ENCODE measurements at regions of chr6 and their contacts with region 1.

Region 1: GRCh38 chr6:126804332-126805064 is 314.0 kb upstream of the RSPO3 start:
- DNase-seq: no peak
- ATAC-seq: no peak
- H3K4me3 Mint-ChIP-seq: no peak overlapping the region
- H3K27ac Mint-ChIP-seq: no peak overlapping the region
- H3K4me1 Mint-ChIP-seq: no peaks in the 10 kb centered on the region
- H3K27me3 Mint-ChIP-seq: peaks cover 2% of the 10 kb centered on the region
- CTCF ChIP-seq: no peak

Region 2: GRCh38 chr6:127120787-127121636 is 316.5 kb after region 1 on chr6:
- CTCF ChIA-PET with region 1: interaction called, 3 read pairs
- POLR2A ChIA-PET with region 1: no interaction called
- intact Hi-C with region 1: loop called (anchors 1 kb)
- DNase-seq: peak; percentile 33
- ATAC-seq: peak; percentile 78
- H3K4me3 Mint-ChIP-seq: peak overlapping the region; percentile 39
- H3K27ac Mint-ChIP-seq: no peak overlapping the region
- H3K4me1 Mint-ChIP-seq: peaks cover 35% of the 10 kb centered on the region
- H3K27me3 Mint-ChIP-seq: peaks cover 48% of the 10 kb centered on the region
- CTCF ChIP-seq: no peak

Region 3: GRCh38 chr6:127547215-127547614 is 742.7 kb after region 1 on chr6:
- CTCF ChIA-PET with region 1: no interaction called
- POLR2A ChIA-PET with region 1: no interaction called
- intact Hi-C with region 1: loop called (anchors 10 kb)
- DNase-seq: no peak
- ATAC-seq: no peak
- H3K4me3 Mint-ChIP-seq: no peak overlapping the region
- H3K27ac Mint-ChIP-seq: no peak overlapping the region
- H3K4me1 Mint-ChIP-seq: no peaks in the 10 kb centered on the region
- H3K27me3 Mint-ChIP-seq: peaks cover 19% of the 10 kb centered on the region
- CTCF ChIP-seq: no peak

Measured in activated B cell treated with CpG ODN at 0.5 μM for 24 hours (primary cell).